ENCODE measurements at regions of chr18 and their contacts with region 1.

Region 1: GRCh38 chr18:44679056-44679905 is 1.4 kb upstream of the SETBP1 start:
- DNase-seq: peak; percentile 92
- ATAC-seq: peak; percentile 79
- H3K4me3 ChIP-seq: peak overlapping the region in 4 of 5 experiments; percentile 64 to 88 (median 80)
- H3K4me3 Mint-ChIP-seq: peak overlapping the region; percentile 87
- H3K27ac ChIP-seq: peak overlapping the region; percentile 79 to 82
- H3K27ac Mint-ChIP-seq: peak overlapping the region; percentile 89
- H3K4me1 ChIP-seq: peaks cover 29 to 36% of the 10 kb centered on the region in 2 donors
- H3K4me1 Mint-ChIP-seq: peaks cover 7% of the 10 kb centered on the region
- H3K27me3 ChIP-seq: no peaks in the 10 kb centered on the region
- H3K27me3 Mint-ChIP-seq: no peaks in the 10 kb centered on the region
- CTCF ChIP-seq: peak; percentile 81

Region 2: DNA sequence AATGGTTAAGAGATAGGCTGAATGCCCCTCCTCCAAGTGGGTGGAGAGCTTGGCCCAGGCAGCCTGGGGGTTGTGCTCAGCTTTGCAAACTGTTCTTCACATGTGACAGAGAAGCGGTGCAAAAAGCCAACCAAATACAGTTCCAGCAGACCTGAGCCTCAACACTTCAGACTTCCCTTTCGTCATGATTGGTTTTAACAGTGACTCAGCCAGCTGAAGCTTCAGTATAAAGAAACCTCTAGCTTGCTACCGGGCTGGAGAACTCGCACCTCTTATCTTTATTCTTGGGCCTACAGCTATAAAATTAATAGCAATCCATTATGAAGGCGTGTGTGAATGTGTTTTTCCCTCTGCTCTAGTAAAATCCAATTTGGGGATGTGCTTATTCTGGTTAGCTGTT is 21.4 kb after region 1 on chr18:
- CTCF ChIA-PET with region 1: interaction called, 4 read pairs
- POLR2A ChIA-PET with region 1: no interaction called
- intact Hi-C with region 1: loop called (anchors 1 kb)
- DNase-seq: peak; percentile 54
- ATAC-seq: peak; percentile 96
- H3K4me3 ChIP-seq: no peak overlapping the region
- H3K4me3 Mint-ChIP-seq: peak overlapping the region; percentile 10
- H3K27ac ChIP-seq: peak overlapping the region in 1 of 2 donors; percentile 44
- H3K27ac Mint-ChIP-seq: peak overlapping the region; percentile 44
- H3K4me1 ChIP-seq: peaks cover 28 to 46% of the 10 kb centered on the region in 2 donors
- H3K4me1 Mint-ChIP-seq: peaks cover 78% of the 10 kb centered on the region
- H3K27me3 ChIP-seq: no peaks in the 10 kb centered on the region
- H3K27me3 Mint-ChIP-seq: no peaks in the 10 kb centered on the region
- CTCF ChIP-seq: no peak

Region 3: GRCh38 chr18:44758861-44759631 is 79.8 kb after region 1 on chr18:
- CTCF ChIA-PET with region 1: interaction called, 16 read pairs
- POLR2A ChIA-PET with region 1: interaction called, 32 read pairs
- intact Hi-C with region 1: loop called (anchors 1 kb)
- DNase-seq: peak; percentile 90
- ATAC-seq: peak; percentile 84
- H3K4me3 ChIP-seq: peak overlapping the region in 4 of 5 experiments; percentile 9 to 42 (median 28)
- H3K4me3 Mint-ChIP-seq: peak overlapping the region; percentile 77
- H3K27ac ChIP-seq: peak overlapping the region; percentile 87 to 94
- H3K27ac Mint-ChIP-seq: peak overlapping the region; percentile 94
- H3K4me1 ChIP-seq: peaks cover 79 to 84% of the 10 kb centered on the region in 2 donors
- H3K4me1 Mint-ChIP-seq: peaks cover 96% of the 10 kb centered on the region
- H3K27me3 ChIP-seq: no peaks in the 10 kb centered on the region
- H3K27me3 Mint-ChIP-seq: no peaks in the 10 kb centered on the region
- CTCF ChIP-seq: no peak

Region 4: DNA sequence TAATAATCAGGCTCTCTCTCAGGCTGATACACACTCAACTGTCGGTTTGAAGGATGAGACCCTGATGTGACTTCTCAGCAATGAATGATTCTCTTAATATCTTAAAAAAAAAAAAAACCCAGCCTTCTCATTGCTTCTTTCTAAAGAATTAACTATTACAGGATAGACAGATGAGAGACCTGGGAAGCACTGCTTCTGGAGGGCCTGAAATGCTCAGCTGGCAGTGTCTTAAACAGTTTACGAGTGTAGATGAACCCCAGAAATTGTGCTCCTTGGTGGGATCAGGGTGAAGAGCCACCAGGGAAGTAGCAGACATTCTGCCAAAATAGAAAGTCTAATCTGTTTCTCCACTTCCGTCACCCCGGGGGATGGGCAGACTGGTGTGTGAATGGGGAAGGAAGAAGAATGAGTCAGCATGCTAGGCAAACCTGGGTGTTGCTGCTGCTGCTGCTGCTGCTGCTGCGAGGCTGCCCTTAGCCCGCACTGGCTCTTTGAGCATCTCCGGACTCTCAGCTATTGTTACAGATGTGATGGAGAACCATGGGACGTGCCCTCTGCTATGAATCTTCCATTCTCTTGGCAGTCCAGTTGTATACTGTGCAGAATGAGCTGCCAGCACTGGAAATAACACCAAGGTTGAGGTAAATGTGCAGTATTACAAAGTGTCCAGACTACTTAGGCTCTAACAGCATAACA is 159.8 kb after region 1 on chr18:
- CTCF ChIA-PET with region 1: interaction called, 7 read pairs
- POLR2A ChIA-PET with region 1: interaction called, 4 read pairs
- intact Hi-C with region 1: loop called (anchors 1 kb)
- DNase-seq: peak; percentile 71
- ATAC-seq: peak; percentile 94
- H3K4me3 ChIP-seq: peak overlapping the region in 1 of 5 experiments; percentile 22
- H3K4me3 Mint-ChIP-seq: peak overlapping the region; percentile 65
- H3K27ac ChIP-seq: no peak overlapping the region
- H3K27ac Mint-ChIP-seq: peak overlapping the region; percentile 75
- H3K4me1 ChIP-seq: peaks cover 38 to 56% of the 10 kb centered on the region in 2 donors
- H3K4me1 Mint-ChIP-seq: peaks cover 82% of the 10 kb centered on the region
- H3K27me3 ChIP-seq: no peaks in the 10 kb centered on the region
- H3K27me3 Mint-ChIP-seq: no peaks in the 10 kb centered on the region
- CTCF ChIP-seq: no peak

Region 5: DNA sequence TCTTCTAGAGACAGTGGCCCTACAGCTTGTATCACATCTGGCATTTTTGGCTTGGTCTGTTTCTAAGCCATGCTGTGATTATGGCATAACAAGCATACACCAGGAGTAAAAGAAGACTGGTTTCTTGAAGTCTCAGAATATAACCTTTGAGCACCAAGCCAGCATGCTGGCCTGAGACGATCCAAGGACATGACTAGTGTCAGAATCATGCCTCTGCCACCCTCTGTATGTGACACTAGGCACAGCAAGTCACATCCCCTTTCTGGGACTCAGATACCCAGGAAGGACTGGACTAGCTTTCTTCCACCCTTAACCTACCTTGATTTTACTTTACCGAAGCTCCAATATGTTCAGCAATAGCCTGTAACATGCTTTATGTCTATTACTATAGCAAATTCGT is 346.9 kb after region 1 on chr18:
- CTCF ChIA-PET with region 1: interaction called, 5 read pairs
- POLR2A ChIA-PET with region 1: no interaction called
- intact Hi-C with region 1: loop called (anchors 10 kb)
- DNase-seq: no peak
- ATAC-seq: peak; percentile 28
- H3K4me3 ChIP-seq: no peak overlapping the region
- H3K4me3 Mint-ChIP-seq: no peak overlapping the region
- H3K27ac ChIP-seq: no peak overlapping the region
- H3K27ac Mint-ChIP-seq: no peak overlapping the region
- H3K4me1 ChIP-seq: peaks cover 14 to 21% of the 10 kb centered on the region in 2 donors
- H3K4me1 Mint-ChIP-seq: peaks cover 32% of the 10 kb centered on the region
- H3K27me3 ChIP-seq: no peaks in the 10 kb centered on the region
- H3K27me3 Mint-ChIP-seq: no peaks in the 10 kb centered on the region
- CTCF ChIP-seq: no peak

Region 6: DNA sequence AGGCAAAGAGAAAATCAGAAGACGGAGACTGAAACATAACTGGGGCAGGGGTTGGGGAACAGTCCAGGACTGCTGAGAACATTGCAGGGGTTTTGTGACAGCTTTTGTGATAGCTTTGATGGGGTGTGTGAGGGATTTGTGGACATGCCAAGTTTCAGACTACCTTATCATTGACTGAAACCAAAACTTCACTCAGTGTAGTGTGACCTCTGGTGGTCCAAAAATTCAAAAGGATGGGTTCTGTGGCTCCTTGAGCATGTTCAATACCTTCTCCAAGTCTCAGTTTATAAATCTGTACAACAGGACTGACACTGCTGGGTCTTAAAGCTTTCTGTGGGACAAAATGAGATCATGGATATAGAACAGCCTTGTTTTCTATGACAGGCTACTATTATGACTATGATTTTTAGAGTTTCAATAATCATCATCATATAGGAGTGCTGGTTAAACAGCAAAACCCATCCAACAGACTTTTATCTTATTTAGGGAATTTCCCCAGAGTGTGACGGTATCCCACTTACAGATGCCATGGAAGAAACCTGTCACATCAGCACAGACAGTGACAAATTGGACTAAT is 676.8 kb after region 1 on chr18:
- CTCF ChIA-PET with region 1: no interaction called
- POLR2A ChIA-PET with region 1: interaction called, 4 read pairs
- intact Hi-C with region 1: loop called (anchors 10 kb)
- DNase-seq: peak; percentile 13
- ATAC-seq: no peak
- H3K4me3 ChIP-seq: no peak overlapping the region
- H3K4me3 Mint-ChIP-seq: no peak overlapping the region
- H3K27ac ChIP-seq: no peak overlapping the region
- H3K27ac Mint-ChIP-seq: no peak overlapping the region
- H3K4me1 ChIP-seq: no peaks in the 10 kb centered on the region
- H3K4me1 Mint-ChIP-seq: no peaks in the 10 kb centered on the region
- H3K27me3 ChIP-seq: peaks cover 0 to 1% (median 0%) of the 10 kb centered on the region in 4 experiments
- H3K27me3 Mint-ChIP-seq: peaks cover 13% of the 10 kb centered on the region
- CTCF ChIP-seq: no peak